Caco-2 (cell line): ENCODE measurements at regions of chr17 and their contacts with region 1.

Region 1: GRCh38 chr17:29347831-29348629 is 42.1 kb upstream of the TAOK1 start:
- DNase-seq: no peak
- H3K4me3 ChIP-seq: no peak overlapping the region
- H3K4me3 Mint-ChIP-seq: no peak overlapping the region
- H3K27ac Mint-ChIP-seq: peak overlapping the region; percentile 34
- H3K4me1 ChIP-seq: peaks cover 22% of the 10 kb centered on the region
- H3K4me1 Mint-ChIP-seq: peaks cover 24% of the 10 kb centered on the region
- H3K27me3 ChIP-seq: no peaks in the 10 kb centered on the region
- H3K27me3 Mint-ChIP-seq: no peaks in the 10 kb centered on the region
- CTCF ChIP-seq: no peak

Region 2: DNA sequence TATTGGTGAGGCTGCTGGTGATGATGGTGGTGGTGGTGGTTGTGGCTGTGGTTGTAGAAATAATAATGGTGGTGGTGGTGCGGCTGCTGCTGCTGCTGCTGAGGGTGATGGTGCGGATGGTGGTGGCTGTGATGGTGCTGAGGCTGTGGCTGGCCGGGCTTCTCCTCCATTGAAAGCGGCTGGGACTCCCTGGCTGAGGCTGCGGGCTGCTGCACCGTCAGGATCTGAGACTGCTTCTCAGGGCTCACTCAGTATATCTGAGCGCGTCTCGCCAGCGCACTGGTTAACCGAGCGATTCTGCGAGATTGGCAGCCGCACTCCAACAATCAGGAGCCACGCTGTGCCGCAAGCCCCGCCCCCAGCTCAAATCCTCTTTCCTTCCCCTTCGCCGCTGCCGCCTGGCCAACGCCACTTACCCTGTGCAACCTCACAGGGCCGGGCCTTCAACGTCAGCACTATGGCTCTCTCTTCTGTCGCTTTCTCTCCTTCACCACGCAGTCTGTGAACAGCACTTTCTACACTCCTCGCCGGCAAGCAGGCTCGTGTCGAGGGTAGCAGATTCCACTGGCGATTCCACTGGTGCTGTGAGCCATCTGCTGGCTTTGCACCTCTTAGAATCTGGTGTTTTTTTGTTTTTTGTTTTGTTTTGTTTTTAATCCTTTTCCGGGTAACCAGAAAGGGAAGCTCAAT is 54.0 kb before region 1 on chr17 and contains the start of gene NUFIP2:
- CTCF ChIA-PET with region 1: interaction called, 5 read pairs
- POLR2A ChIA-PET with region 1: interaction called, 32 read pairs
- intact Hi-C with region 1: loop called (anchors 2 kb)
- DNase-seq: peak; percentile 99
- H3K4me3 ChIP-seq: peak within 1 kb of the TSS; percentile 100
- H3K4me3 Mint-ChIP-seq: peak within 1 kb of the TSS; percentile 94
- H3K27ac Mint-ChIP-seq: peak within 1 kb of the TSS; percentile 96
- H3K4me1 ChIP-seq: peaks cover 11% of the 10 kb centered on the region
- H3K4me1 Mint-ChIP-seq: peaks cover 13% of the 10 kb centered on the region
- H3K27me3 ChIP-seq: no peaks in the 10 kb centered on the region
- H3K27me3 Mint-ChIP-seq: no peaks in the 10 kb centered on the region
- CTCF ChIP-seq: no peak
- total RNA-seq, gene NUFIP2: 105 and 114 TPM in 2 replicates

Region 3: DNA sequence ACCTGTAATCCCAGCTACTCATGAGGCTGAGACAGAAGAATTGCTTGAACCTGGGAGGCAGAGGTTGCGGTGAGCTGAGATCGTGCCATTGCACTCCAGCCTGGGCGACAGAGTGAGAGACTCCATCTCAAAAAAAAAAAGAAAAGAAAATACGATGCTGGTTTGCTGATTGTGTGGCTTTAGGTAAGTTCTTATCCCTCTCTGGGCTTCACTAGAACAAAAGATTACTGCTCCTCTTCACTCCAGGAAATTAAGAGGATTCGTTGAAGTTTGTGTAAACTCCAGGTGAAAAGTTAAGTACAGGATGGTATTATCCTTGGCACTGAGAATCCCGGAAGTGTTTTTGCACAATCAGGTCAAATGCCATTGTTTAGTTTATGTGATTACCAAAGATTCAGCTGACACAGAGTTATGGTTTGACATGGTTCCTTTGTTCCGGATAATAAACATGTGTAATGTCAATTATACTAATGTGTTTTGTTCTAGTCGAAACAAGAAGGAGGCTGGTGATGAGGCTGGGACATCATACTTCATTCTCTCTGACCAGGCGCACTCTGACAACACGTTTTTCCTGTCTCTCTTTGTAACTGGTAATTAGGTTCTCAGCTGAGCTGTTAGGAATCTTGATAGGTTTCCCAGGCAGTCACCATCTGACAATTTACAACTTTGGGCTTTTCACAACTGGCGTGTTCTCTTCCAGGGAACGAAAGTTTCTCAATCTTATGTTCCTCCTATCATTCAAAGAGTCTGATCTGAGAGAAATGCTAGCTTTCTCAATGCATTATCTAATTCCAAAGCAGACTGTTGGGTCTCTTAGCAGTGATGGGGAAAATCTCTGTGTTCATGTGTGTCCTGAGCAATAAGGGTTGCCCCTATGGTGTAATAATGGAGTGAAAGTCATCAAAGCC is 31.3 kb after region 1 on chr17:
- CTCF ChIA-PET with region 1: no interaction called
- POLR2A ChIA-PET with region 1: interaction called, 14 read pairs
- intact Hi-C with region 1: no loop called
- DNase-seq: no peak
- H3K4me3 ChIP-seq: no peak overlapping the region
- H3K4me3 Mint-ChIP-seq: no peak overlapping the region
- H3K27ac Mint-ChIP-seq: no peak overlapping the region
- H3K4me1 ChIP-seq: no peaks in the 10 kb centered on the region
- H3K4me1 Mint-ChIP-seq: peaks cover 7% of the 10 kb centered on the region
- H3K27me3 ChIP-seq: no peaks in the 10 kb centered on the region
- H3K27me3 Mint-ChIP-seq: no peaks in the 10 kb centered on the region
- CTCF ChIP-seq: no peak